ENCODE measurements at regions of chr9 and their contacts with region 1.

Region 1: DNA sequence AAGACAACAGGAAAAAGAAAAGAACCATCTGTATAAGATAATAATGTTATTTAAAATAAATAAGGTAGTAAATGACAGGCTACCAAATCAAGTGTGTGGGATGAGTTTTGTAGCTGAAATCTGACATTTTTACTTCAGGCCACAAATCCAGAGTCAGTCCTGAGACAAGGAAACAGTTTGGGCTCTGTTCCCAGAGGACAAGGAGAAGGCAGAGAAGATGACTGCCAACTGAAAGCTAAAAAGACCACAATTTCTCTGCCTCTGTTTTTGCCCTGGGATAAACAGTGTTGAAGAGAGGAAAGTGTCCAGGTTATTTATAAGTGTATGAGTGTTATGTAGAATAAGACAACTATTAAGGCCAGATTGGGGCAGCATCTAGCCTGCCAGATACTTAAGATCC is 180.5 kb downstream of the NFIB start:
- DNase-seq: no peak
- ATAC-seq: no peak
- H3K4me3 ChIP-seq: no peak overlapping the region
- H3K4me3 Mint-ChIP-seq: no peak overlapping the region
- H3K27ac ChIP-seq: no peak overlapping the region
- H3K27ac Mint-ChIP-seq: no peak overlapping the region
- H3K4me1 ChIP-seq: no peaks in the 10 kb centered on the region
- H3K4me1 Mint-ChIP-seq: no peaks in the 10 kb centered on the region
- H3K27me3 ChIP-seq: no peaks in the 10 kb centered on the region
- H3K27me3 Mint-ChIP-seq: no peaks in the 10 kb centered on the region

Region 2: DNA sequence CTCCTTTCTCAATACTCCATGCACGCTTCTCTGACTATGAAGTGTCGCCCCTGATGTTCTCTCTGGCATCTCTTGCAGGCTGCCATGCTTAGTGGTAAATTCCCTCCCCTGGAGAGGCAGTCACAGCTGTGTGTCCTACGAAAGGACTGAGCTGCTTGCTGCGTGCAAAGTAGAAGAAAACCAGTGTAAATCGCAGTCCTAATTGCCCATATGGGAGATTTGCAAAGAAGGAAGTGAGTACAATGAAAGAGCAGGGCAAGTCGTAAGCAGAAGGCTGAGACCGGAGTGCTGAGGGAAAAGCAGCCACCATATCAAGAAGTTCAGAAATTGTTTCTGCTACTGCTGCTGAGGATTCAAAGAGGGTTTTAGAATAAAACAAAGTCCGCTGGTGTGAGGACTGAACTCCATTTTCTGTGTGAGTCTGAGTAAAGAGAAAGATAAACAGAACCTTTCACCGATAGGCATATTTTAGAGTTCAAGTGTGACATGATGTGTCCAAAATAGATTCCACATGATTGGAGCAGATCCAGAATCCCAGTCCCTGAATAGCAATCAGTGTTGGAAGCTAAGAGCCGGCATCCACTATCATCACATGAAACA is 346.1 kb before region 1 on chr9:
- CTCF ChIA-PET with region 1: no interaction called
- POLR2A ChIA-PET with region 1: interaction called in 1 of 2 experiments, 12 read pairs
- DNase-seq: no peak
- ATAC-seq: no peak
- H3K4me3 ChIP-seq: no peak overlapping the region
- H3K4me3 Mint-ChIP-seq: no peak overlapping the region
- H3K27ac ChIP-seq: no peak overlapping the region
- H3K27ac Mint-ChIP-seq: no peak overlapping the region
- H3K4me1 ChIP-seq: no peaks in the 10 kb centered on the region
- H3K4me1 Mint-ChIP-seq: no peaks in the 10 kb centered on the region
- H3K27me3 ChIP-seq: no peaks in the 10 kb centered on the region
- H3K27me3 Mint-ChIP-seq: no peaks in the 10 kb centered on the region

Region 3: DNA sequence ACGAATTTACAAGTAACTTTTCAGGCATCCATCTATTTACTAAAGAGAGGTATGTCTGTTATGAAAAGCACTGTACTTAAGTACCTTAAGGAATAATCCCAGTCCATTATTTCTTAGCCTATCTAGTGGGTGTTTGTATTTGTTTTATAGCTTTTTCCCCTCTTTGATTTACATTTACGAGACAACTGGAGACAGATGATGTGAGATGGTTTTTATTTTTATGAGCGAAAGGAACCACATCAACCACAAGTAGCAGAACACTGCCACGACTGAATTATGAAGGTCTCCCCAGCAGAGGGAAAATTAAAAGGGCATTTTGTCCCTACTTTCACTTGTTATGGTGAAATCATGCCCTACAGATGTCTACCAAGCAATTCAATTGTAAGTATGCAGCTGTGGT is 177.3 kb before region 1 on chr9:
- CTCF ChIA-PET with region 1: no interaction called
- POLR2A ChIA-PET with region 1: no interaction called
- DNase-seq: no peak
- ATAC-seq: no peak
- H3K4me3 ChIP-seq: no peak overlapping the region
- H3K4me3 Mint-ChIP-seq: no peak overlapping the region
- H3K27ac ChIP-seq: no peak overlapping the region
- H3K27ac Mint-ChIP-seq: no peak overlapping the region
- H3K4me1 ChIP-seq: no peaks in the 10 kb centered on the region
- H3K4me1 Mint-ChIP-seq: no peaks in the 10 kb centered on the region
- H3K27me3 ChIP-seq: no peaks in the 10 kb centered on the region
- H3K27me3 Mint-ChIP-seq: no peaks in the 10 kb centered on the region

Measured in T-cell (primary cell).